ENCODE measurements at regions of chr17 and their contacts with region 1.

Region 1: GRCh38 chr17:58112970-58113631 is 29.9 kb downstream of the DYNLL2 start:
- DNase-seq: peak; percentile 56 to 93 (median 79)
- ATAC-seq: peak; percentile 94
- H3K4me3 ChIP-seq: no peak overlapping the region
- H3K4me1 ChIP-seq: no peaks in the 10 kb centered on the region
- CTCF ChIP-seq: peak; percentile 87

Region 2: DNA sequence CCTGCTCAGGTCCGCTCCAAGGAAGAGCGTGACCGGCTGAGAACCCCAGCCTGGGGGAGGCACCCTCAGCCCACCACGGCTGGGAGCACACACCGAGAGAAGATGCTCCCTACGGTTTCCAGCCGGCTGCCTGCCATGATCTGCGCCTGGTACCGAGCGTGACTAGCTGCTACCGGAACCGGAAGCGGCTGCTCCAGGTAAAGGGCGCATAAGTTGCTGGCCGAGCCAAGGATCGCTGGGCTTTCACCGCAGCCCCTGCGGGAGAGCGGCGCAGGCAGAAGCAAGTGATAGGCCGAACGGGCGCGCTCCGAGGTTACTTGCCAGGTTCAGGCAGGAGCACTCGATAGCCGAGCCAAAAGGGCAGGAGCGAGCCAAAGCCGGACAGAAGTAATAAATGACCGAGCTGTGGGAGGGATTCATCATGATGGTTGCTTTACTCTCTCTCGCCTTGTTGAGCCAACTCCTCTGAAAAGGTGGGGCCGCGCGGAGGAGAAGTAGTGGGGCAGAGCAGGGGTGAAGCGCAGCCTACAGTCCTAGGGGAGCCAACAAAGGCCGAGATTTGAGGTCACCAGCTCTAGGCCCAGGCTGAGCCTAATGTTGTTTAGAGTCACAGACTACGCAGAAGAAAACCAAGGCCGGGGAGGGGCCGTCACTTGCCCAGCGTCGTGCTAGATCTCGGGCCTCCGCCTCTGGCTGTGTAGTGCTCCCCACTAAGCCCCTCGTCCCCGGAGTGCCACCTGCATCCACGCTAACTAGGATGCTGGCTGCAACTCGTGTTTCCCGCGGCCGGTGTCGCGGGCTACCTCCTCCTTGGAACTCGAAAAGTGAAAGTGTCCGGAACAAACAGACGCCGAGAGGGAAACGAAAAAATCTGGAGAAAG is 263.0 kb before region 1 on chr17 and contains the start of gene MRPS23:
- intact Hi-C with region 1: loop called in 1 of 2 experiments (anchors 10 kb)
- DNase-seq: peak; percentile 98 to 99 (median 98)
- ATAC-seq: peak; percentile 97
- H3K4me3 ChIP-seq: peak within 1 kb of the TSS; percentile 74
- H3K4me1 ChIP-seq: peaks cover 22% of the 10 kb centered on the region
- CTCF ChIP-seq: no peak
- total RNA-seq, gene MRPS23: 15.1 to 27.2 (median 24.0) TPM

Region 3: DNA sequence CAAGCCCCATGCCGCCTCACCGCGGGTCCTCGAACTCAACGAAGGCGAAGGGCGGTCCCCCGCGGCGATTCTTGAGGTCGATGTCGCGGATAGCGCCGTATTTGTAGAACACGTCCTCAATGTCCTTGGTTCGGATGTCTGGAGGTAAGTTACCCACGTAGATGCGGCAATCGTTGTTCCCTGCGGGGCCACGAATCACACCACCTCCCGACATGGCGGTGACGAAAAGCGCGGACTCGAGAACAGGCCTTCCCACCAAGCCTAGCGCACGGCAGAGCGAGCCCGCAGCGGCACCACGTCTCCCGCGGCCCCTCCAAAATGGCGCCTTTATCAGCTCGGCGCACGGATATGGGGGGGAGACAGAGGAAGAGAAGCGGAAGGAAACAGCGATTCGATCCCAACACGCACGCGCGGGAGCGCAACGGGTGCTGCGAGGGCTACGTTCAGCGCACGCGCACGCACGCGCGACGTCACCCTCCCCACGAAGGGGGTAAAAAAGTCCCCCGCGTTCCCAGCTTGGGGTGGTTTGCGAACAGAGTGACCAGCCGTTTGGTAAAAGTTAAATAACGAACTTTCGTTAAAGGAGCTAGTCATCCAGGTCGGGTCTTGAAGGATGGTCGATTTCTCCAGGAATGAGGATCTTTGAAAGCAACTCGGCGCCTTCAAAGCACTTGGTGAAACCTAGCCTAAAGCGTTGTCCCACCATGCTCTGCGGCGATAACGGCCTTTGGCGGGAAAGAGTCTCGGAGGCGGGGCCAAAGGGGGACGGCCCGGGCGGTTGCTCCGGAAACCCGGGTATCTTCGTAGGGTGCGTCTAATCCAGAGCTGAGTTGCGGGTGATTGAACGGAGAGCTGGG is 105.9 kb before region 1 on chr17 and contains the start of gene SRSF1:
- intact Hi-C with region 1: loop called (anchors 10 kb)
- DNase-seq: peak; percentile 97 to 99 (median 98)
- ATAC-seq: peak; percentile 96
- H3K4me3 ChIP-seq: peak within 1 kb of the TSS; percentile 83
- H3K4me1 ChIP-seq: peaks cover 27% of the 10 kb centered on the region
- CTCF ChIP-seq: no peak
- total RNA-seq, gene SRSF1: 150 to 188 (median 184) TPM

Region 4: DNA sequence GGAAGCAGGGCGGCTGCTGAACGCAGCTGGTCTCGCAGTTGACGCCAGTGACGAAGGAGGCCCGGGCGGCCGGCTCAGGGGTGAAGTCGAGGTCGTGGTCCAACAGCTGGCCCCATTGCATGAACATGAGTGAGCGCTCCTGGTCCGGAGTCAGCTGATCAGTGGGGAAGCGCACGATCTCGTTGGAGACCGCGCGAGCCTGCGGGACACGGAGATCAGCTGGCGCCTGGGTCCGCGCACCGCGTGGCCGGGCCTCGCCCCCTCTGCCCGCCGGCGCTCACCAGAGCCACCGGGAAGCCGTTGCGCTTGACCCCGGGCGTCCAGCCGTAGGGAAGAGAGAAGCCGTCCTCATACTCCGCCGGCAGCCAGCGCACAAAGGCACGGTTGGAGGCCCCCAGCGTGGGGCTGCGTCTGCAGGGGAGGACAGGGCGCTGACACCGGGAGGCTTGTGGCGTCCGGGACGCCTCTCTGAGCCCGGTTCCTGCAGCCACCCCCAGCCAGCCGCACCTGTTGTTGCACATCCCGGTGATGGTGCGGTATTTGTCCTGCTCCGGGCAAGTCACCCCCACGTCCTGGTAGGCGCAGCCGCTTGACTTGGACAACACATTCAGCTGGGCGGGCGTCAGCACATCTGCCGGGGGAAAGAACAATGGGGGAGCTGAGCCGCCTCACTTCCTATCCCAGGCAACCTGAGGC is 166.1 kb after region 1 on chr17:
- intact Hi-C with region 1: no loop called
- DNase-seq: peak in 2 of 3 donors; percentile 23 to 65
- ATAC-seq: peak; percentile 69
- H3K4me3 ChIP-seq: no peak overlapping the region
- H3K4me1 ChIP-seq: no peaks in the 10 kb centered on the region
- CTCF ChIP-seq: no peak

Region 5: GRCh38 chr17:58302171-58302918 is 189.2 kb after region 1 on chr17:
- intact Hi-C with region 1: no loop called
- DNase-seq: no peak
- ATAC-seq: no peak
- H3K4me3 ChIP-seq: no peak overlapping the region
- H3K4me1 ChIP-seq: no peaks in the 10 kb centered on the region
- CTCF ChIP-seq: no peak

Region 6: DNA sequence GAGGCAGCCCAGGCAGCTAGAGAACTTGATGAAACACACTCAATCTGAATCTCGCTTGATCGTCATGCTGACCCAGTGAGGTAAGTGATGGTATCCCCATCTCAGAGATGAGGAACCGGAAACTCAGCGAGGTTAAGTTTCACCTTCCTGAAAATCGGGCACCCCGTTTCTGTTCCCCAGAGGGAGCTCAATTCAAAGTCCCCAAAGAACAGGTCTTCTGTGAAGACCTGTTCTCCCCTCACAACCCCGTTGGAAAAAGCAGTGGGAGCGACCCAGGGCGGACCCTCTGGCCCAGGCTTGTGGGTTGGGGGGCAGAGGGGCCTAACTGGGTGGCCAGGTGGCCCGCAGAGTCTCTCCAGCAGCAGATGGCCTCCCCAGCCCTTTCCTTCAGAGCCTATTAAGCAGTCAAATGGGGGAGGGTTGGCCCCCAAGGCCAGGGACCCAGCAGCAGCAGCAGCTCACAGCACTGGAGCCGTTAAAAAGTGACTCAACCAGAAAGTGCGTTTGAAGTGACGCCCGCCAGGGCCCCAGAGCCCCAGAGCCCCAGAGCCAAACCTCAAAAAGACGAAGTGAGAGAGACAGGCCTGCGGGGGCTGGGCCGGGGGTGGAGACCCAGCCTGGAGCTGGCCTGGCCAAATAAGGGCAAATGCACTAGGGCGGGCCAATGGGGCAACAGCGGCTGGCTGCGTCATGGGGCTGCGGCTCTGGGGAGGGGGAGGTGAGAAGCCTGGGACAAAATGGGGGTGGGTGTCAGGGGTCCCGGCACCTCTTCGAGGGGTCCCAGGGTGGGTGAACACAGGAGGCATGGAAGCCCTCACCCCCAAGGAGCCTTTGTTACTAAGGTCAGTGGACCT is 224.7 kb after region 1 on chr17:
- intact Hi-C with region 1: no loop called
- DNase-seq: peak; percentile 74 to 94 (median 82)
- ATAC-seq: peak; percentile 75
- H3K4me3 ChIP-seq: no peak overlapping the region
- H3K4me1 ChIP-seq: peaks cover 12% of the 10 kb centered on the region
- CTCF ChIP-seq: no peak

Measured in mucosa of descending colon (tissue), 3 donors.